ENCODE measurements at regions of chr11 and their contacts with region 1.

Region 1: GRCh38 chr11:65859200-65859811 is 927 bp upstream of the MUS81 start:
- DNase-seq: peak; percentile 98
- H3K4me3 Mint-ChIP-seq: peak overlapping the region; percentile 83
- H3K27ac Mint-ChIP-seq: peak overlapping the region; percentile 93
- H3K4me1 Mint-ChIP-seq: peaks cover 32% of the 10 kb centered on the region
- H3K27me3 Mint-ChIP-seq: no peaks in the 10 kb centered on the region
- CTCF ChIP-seq: no peak

Region 2: DNA sequence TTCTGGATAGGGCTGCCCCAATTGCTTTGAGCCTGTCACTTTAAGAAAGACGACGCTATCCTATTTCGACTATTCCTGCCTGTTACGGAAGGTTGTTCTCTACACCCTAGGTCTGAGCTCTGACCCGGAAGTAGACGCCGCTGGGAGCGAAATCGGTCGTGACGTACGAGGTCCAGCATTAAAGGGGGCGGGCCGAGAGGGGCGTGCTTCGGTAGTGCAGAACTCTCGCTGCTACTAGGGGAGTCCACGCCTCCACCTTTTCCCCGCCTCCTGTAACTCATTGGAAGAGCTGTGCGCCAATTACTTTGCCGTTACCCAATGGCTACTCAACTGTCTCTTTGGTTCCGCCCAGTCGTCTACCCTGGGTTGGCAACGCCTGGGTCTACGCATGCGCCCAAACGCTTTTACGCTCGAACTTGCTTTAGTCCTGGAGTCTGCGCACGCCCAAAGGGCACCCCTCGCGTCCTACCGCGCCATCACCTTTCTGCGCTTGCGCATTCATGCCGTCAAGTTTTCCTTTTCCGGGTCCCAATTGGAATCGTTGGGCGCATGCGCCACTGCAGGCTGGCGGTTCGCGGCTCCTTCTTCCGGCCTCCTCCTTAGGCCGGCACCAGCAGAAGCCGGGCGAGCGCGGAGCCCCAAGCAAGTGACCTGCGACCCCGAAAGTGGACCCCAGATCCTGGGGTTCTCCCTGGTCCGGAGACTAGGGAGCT is 243.9 kb before region 1 on chr11 and contains the start of gene PCNX3:
- CTCF ChIA-PET with region 1: interaction called, 3 read pairs
- POLR2A ChIA-PET with region 1: interaction called, 30 read pairs
- intact Hi-C with region 1: no loop called
- DNase-seq: peak; percentile 100
- H3K4me3 Mint-ChIP-seq: peak within 1 kb of the TSS; percentile 91
- H3K27ac Mint-ChIP-seq: peak within 1 kb of the TSS; percentile 96
- H3K4me1 Mint-ChIP-seq: peaks cover 26% of the 10 kb centered on the region
- H3K27me3 Mint-ChIP-seq: no peaks in the 10 kb centered on the region
- CTCF ChIP-seq: no peak
- total RNA-seq, gene PCNX3: 40.9 and 45.8 TPM in 2 replicates

Region 3: GRCh38 chr11:65695456-65696241 is 163.7 kb before region 1 on chr11:
- CTCF ChIA-PET with region 1: no interaction called
- POLR2A ChIA-PET with region 1: no interaction called
- intact Hi-C with region 1: no loop called
- DNase-seq: peak; percentile 61
- H3K4me3 Mint-ChIP-seq: no peak overlapping the region
- H3K27ac Mint-ChIP-seq: no peak overlapping the region
- H3K4me1 Mint-ChIP-seq: no peaks in the 10 kb centered on the region
- H3K27me3 Mint-ChIP-seq: peaks cover 30% of the 10 kb centered on the region
- CTCF ChIP-seq: no peak

Region 4: GRCh38 chr11:65711785-65712632 is 147.3 kb before region 1 on chr11 and contains the start of gene KAT5:
- CTCF ChIA-PET with region 1: interaction called, 10 read pairs
- POLR2A ChIA-PET with region 1: interaction called, 39 read pairs
- intact Hi-C with region 1: no loop called
- DNase-seq: peak; percentile 98
- H3K4me3 Mint-ChIP-seq: peak within 1 kb of the TSS; percentile 80
- H3K27ac Mint-ChIP-seq: peak within 1 kb of the TSS; percentile 99
- H3K4me1 Mint-ChIP-seq: no peaks in the 10 kb centered on the region
- H3K27me3 Mint-ChIP-seq: no peaks in the 10 kb centered on the region
- CTCF ChIP-seq: peak; percentile 95
- total RNA-seq, gene KAT5: 37.6 and 48.1 TPM in 2 replicates

Region 5: DNA sequence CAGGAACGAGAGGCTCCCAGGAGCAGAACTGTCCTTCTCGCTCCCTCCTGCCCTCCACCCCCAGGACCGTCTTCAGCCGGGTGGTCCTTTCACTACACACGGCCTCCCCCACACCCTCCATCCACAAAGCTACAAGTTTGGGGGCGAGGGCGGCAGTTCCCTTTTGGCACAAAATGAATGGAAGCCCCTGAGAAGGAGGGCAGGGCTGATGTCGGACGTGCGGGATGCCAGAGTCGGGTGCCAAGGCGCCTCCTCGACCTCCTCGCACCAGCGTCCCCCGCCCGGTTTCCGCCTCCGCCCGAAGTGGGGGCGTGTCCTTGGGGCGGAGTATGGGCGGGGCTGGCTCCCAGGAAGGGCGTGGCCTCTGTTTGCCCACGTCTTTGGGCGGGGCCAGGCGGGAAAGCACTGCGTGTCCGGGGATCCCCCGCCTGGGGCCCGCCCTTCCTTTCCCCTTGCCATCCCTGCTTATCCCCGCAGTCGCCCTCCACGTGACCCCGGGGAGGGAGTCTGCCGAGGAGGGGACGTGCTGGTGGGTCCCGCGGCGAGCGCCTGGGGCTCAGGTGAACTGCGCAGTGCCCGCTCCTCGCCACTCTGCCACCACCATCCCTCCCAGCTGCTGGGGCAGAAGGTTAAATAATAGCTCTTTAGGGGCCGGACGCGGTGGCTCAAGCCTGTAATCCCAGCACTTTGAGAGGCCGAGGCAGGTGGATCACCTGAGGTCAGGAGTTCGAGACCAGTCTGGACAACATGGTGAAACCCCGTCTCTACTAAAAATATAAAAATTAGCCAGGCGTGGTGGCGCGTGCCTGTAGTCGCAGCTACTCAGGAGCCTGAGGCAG is 14.2 kb after region 1 on chr11:
- CTCF ChIA-PET with region 1: interaction called, 41 read pairs
- POLR2A ChIA-PET with region 1: interaction called, 57 read pairs
- intact Hi-C with region 1: no loop called
- DNase-seq: peak; percentile 92
- H3K4me3 Mint-ChIP-seq: peak overlapping the region; percentile 78
- H3K27ac Mint-ChIP-seq: peak overlapping the region; percentile 87
- H3K4me1 Mint-ChIP-seq: peaks cover 7% of the 10 kb centered on the region
- H3K27me3 Mint-ChIP-seq: no peaks in the 10 kb centered on the region
- CTCF ChIP-seq: no peak

Region 6: DNA sequence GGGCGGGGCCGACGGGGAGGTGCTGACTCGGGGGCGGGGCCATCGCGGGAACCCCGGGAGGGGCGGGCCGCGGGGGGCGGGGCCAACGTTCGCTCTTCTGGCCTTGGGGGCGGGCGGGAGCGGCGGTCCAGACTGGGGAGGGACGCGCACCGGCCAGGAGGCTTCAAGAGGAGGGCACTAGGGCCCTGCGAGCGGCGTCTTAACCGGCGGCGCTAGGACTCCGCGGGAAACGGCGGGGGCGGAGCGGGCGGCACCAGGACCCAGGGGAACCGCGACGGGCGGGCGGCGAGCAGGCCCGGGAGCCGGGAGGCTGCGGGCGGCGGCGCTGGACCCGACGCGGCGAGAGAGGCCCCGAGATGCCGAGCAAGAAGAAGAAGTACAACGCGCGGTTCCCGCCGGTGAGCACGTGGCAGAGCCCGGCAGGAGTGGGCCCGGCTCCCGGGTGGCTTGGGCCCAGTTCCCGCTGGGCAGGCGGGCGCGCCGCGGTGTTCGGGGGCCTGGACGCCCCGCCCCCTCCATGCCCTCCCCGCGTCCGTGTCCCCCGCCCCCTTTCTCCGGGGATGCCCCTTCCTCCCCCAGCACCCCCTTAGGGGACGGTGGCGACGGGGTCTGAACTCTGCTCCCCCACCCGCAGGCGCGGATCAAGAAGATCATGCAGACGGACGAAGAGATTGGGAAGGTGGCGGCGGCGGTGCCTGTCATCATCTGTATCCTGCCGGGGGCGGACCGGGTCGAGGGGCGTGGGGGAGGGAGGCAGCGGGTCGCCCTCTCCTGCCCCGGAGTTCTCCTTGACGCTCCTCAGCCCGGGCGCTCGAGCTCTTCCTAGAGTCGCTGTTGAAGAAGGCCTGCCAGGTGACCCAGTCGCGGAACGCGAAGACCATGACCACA is 60.1 kb after region 1 on chr11 and contains the start of gene DRAP1:
- CTCF ChIA-PET with region 1: interaction called, 3 read pairs
- POLR2A ChIA-PET with region 1: interaction called, 12 read pairs
- intact Hi-C with region 1: no loop called
- DNase-seq: peak; percentile 97
- H3K4me3 Mint-ChIP-seq: peak within 1 kb of the TSS; percentile 89
- H3K27ac Mint-ChIP-seq: peak within 1 kb of the TSS; percentile 81
- H3K4me1 Mint-ChIP-seq: peaks cover 36% of the 10 kb centered on the region
- H3K27me3 Mint-ChIP-seq: no peaks in the 10 kb centered on the region
- CTCF ChIP-seq: no peak
- total RNA-seq, gene DRAP1: 162 and 167 TPM in 2 replicates

Region 7: GRCh38 chr11:66051766-66052663 is 192.7 kb after region 1 on chr11 and contains the start of gene SF3B2:
- CTCF ChIA-PET with region 1: no interaction called
- POLR2A ChIA-PET with region 1: interaction called, 17 read pairs
- intact Hi-C with region 1: no loop called
- DNase-seq: peak; percentile 98
- H3K4me3 Mint-ChIP-seq: peak within 1 kb of the TSS; percentile 97
- H3K27ac Mint-ChIP-seq: peak within 1 kb of the TSS; percentile 91
- H3K4me1 Mint-ChIP-seq: peaks cover 5% of the 10 kb centered on the region
- H3K27me3 Mint-ChIP-seq: no peaks in the 10 kb centered on the region
- CTCF ChIP-seq: no peak
- total RNA-seq, gene SF3B2: 241 and 317 TPM in 2 replicates